ENCODE measurements at regions of chr2 and their contacts with region 1.

Region 1: DNA sequence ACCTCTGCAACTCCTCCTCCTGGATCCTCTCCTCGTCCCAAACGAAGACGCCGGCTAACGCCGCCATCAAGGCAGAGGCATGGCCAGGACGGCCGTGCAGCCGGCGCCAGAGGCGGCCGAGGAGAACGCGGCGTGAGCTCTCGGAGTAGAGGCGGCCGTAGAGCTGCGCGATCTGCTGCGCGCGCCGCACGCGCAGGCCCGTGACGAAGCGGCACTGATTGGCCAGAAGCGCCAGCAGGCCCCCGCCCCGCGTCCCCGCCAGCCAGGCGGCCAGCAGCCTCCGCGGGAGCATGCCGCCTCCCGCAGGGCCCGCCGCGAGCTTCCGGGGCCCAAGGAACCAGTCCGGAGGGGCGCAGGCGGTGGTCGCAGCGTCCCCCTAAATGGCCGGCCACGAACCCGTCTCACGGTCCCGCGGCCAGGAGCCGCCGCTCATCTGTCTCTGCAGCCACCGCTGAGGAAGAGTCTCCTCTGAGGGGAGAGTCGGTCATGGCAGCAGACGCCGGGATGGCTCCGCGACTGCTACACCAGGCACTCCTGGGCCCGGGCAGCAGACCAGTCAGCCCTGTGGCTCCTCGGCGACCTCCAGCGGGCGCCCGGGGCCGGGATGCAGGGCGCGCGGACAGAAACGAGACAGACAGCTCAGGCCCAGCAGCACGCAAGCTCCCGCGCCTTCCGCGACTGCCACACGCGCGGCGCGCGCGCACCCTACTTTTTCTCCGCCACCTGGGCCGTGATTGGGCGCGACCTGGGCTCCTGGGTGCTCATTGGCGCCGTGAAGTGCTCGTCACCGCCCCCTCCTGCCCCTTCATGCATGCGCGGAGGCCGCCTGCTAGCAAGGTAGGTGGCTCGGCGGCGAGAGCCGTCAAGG is at the start of gene STARD7:
- DNase-seq: peak; percentile 96
- ATAC-seq: peak; percentile 89
- H3K4me3 Mint-ChIP-seq: peak within 1 kb of the TSS; percentile 92
- H3K27ac Mint-ChIP-seq: peak within 1 kb of the TSS; percentile 91
- H3K4me1 Mint-ChIP-seq: peaks cover 74% of the 10 kb centered on the region
- H3K27me3 Mint-ChIP-seq: no peaks in the 10 kb centered on the region
- CTCF ChIP-seq: no peak
- total RNA-seq, gene STARD7: 148 and 158 TPM in 2 replicates

Region 2: DNA sequence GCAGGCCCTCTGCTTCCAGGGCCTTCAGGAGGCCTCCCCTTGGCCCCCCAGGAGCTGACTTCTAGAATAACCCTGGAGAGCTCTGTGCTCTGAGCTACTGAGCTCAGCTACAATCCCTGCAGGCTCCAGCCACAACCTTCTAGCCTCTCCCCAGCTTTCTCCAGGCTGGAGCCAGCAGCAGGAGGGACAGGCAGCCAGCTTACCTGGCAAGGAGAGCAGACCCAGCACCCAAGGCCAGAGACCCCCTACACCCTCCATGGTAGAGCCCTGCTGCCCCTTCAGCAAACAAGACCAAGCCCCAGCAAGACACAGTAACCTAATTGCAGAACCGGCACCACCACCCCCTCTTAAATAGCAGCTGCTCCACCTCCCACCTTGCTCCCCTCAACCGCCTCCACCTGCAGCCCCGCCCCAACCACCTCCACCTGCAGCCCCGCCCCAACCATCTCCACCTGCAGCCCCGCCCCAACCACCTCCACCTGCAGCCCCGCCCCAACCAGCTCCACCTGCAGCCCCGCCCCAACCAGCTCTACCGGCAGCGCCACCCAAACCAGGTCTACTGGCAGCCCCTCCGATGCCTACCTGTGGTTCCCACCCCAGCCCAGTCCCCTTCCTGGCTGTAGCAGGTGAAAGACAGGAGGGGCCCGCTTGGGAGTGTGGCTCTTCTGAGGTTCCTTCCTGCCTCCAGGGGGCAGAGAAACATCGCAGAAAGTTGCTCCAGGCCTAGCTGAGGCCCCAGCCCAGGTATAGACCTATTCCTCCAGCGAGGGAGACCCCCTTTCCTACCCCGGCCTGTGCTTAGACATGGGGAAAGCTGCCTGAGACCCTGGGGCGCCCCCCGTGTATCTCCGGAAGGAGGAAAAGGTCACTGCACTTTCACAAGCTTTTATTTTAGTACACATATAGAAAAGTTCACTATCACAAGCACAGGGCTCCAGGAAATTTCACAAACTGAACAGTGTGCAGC is 69.9 kb before region 1 on chr2 and contains the start of gene ASTL:
- CTCF ChIA-PET with region 1: interaction called, 10 read pairs
- POLR2A ChIA-PET with region 1: interaction called, 13 read pairs
- intact Hi-C with region 1: no loop called
- DNase-seq: peak; percentile 53
- ATAC-seq: peak; percentile 73
- H3K4me3 Mint-ChIP-seq: peak within 1 kb of the TSS; percentile 38
- H3K27ac Mint-ChIP-seq: peak within 1 kb of the TSS; percentile 35
- H3K4me1 Mint-ChIP-seq: peaks cover 37% of the 10 kb centered on the region
- H3K27me3 Mint-ChIP-seq: no peaks in the 10 kb centered on the region
- CTCF ChIP-seq: no peak
- total RNA-seq, gene ASTL: 1.0 and 1.6 TPM in 2 replicates

Region 3: DNA sequence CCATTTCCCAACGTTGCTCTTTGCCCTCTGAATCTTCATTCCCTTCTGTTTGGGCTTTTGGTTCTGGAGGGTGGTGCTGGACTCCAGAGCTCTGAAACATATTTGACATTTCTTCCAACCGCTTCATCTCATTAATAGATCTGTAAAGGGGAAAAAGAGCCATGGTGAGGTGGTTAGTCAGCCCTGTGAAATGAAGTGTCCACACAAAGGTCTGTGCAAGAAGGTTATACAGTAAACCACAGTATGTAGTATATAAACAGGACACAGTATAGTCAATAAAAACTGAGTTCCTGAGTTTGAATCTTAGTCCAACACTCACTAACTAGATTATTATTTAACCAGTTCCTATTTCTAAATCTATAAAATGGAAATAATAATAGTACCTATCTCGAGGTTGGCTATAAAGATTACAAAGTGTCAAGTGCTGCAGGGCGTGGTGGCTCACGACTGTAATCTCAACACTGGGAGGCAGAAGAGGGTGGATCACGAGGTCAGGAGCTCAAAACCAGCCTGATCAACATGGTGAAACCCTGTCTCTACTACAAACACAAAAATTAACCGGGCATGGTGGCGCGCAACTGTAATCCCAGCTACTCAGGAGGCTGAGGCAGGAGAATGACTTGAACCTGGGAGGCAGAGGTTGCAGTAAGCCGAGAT is 12.8 kb before region 1 on chr2:
- CTCF ChIA-PET with region 1: no interaction called
- POLR2A ChIA-PET with region 1: interaction called, 11 read pairs
- intact Hi-C with region 1: loop called (anchors 1 kb)
- DNase-seq: no peak
- ATAC-seq: no peak
- H3K4me3 Mint-ChIP-seq: no peak overlapping the region
- H3K27ac Mint-ChIP-seq: no peak overlapping the region
- H3K4me1 Mint-ChIP-seq: peaks cover 32% of the 10 kb centered on the region
- H3K27me3 Mint-ChIP-seq: no peaks in the 10 kb centered on the region
- CTCF ChIP-seq: no peak

Region 4: GRCh38 chr2:96233880-96234316 is 25.5 kb after region 1 on chr2:
- CTCF ChIA-PET with region 1: interaction called, 12 read pairs
- POLR2A ChIA-PET with region 1: interaction called, 59 read pairs
- intact Hi-C with region 1: loop called (anchors 1 kb)
- DNase-seq: peak; percentile 37
- ATAC-seq: peak; percentile 99
- H3K4me3 Mint-ChIP-seq: peak overlapping the region; percentile 70
- H3K27ac Mint-ChIP-seq: peak overlapping the region; percentile 84
- H3K4me1 Mint-ChIP-seq: peaks cover 17% of the 10 kb centered on the region
- H3K27me3 Mint-ChIP-seq: no peaks in the 10 kb centered on the region
- CTCF ChIP-seq: no peak

Region 5: GRCh38 chr2:96260404-96261260 is 52.3 kb after region 1 on chr2:
- CTCF ChIA-PET with region 1: interaction called, 6 read pairs
- POLR2A ChIA-PET with region 1: interaction called, 40 read pairs
- intact Hi-C with region 1: no loop called
- DNase-seq: no peak
- ATAC-seq: peak; percentile 56
- H3K4me3 Mint-ChIP-seq: peak overlapping the region; percentile 36
- H3K27ac Mint-ChIP-seq: peak overlapping the region; percentile 80
- H3K4me1 Mint-ChIP-seq: peaks cover 89% of the 10 kb centered on the region
- H3K27me3 Mint-ChIP-seq: no peaks in the 10 kb centered on the region
- CTCF ChIP-seq: no peak

Region 6: DNA sequence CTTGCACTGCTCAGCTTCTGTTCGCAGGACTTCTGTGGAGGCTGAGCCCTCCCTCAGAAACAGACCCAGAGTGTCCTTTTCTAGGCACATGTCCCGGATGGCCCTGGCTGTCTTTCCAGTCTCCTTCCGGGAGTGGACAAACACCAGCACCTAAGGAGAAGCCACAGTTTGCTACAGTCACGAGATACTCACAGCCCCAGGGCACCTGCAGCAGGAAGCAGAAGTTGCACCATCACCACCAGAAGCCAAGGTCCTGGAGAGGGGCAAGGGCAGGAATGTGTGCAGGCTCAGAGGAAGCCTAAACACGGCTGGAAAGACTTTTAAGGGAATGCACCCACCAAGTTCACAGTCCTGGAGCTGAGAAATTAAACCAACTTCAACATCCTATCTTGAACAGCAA is 83.4 kb after region 1 on chr2:
- CTCF ChIA-PET with region 1: no interaction called
- POLR2A ChIA-PET with region 1: no interaction called
- intact Hi-C with region 1: no loop called
- DNase-seq: no peak
- ATAC-seq: no peak
- H3K4me3 Mint-ChIP-seq: no peak overlapping the region
- H3K27ac Mint-ChIP-seq: no peak overlapping the region
- H3K4me1 Mint-ChIP-seq: no peaks in the 10 kb centered on the region
- H3K27me3 Mint-ChIP-seq: no peaks in the 10 kb centered on the region
- CTCF ChIP-seq: no peak

Region 7: DNA sequence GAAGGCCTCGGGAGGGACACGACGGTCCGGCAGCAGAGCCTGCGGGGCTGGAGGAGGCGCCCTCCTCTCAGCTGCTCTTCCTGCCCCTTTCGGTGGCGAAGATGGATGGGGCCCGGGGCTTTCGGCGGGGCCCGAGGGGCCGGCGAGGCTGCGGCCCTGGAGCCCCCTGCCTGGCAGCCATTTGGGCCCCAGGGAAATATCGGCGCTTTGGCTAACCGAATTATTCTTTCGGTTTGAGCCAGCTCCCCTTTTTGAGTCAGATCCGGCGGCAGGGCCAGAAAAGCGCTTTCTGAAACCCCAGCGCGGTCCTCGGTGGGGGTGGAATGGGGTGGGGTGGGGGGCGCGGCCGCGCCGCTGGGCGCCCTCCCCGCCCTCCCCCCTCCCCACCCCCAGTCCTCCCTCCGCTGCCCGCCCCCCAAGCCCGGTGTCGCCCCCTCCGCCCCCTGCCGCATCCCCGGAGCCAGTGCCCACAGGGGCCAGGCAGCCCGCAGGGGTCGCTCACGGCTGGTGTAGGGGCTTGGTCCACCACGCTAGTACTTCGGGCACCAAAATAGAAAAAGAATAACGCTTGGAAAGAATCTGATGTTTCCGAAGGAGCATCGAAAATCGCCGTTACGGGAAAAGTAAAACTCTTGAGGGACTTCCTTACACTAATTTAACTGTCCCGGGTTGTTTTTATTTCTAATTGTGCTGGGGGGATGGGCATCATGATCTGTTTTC is 319.1 kb after region 1 on chr2:
- CTCF ChIA-PET with region 1: no interaction called
- POLR2A ChIA-PET with region 1: interaction called, 11 read pairs
- intact Hi-C with region 1: no loop called
- DNase-seq: peak; percentile 57
- ATAC-seq: peak; percentile 47
- H3K4me3 Mint-ChIP-seq: peak overlapping the region; percentile 83
- H3K27ac Mint-ChIP-seq: peak overlapping the region; percentile 83
- H3K4me1 Mint-ChIP-seq: peaks cover 56% of the 10 kb centered on the region
- H3K27me3 Mint-ChIP-seq: peaks cover 3% of the 10 kb centered on the region
- CTCF ChIP-seq: no peak

Measured in activated B cell treated with CpG ODN at 0.5 μM for 24 hours (primary cell).